Panc1 (cell line): ENCODE measurements at regions of chr10 and their contacts with region 1.

Region 1: GRCh38 chr10:29386342-29386999 is 97.6 kb downstream of the LYZL1 start:
- DNase-seq: no peak
- ATAC-seq: no peak
- H3K4me3 ChIP-seq: no peak overlapping the region
- H3K27ac ChIP-seq: no peak overlapping the region
- H3K4me1 ChIP-seq: no peaks in the 10 kb centered on the region
- H3K27me3 ChIP-seq: no peaks in the 10 kb centered on the region
- CTCF ChIP-seq: peak; percentile 77

Region 2: DNA sequence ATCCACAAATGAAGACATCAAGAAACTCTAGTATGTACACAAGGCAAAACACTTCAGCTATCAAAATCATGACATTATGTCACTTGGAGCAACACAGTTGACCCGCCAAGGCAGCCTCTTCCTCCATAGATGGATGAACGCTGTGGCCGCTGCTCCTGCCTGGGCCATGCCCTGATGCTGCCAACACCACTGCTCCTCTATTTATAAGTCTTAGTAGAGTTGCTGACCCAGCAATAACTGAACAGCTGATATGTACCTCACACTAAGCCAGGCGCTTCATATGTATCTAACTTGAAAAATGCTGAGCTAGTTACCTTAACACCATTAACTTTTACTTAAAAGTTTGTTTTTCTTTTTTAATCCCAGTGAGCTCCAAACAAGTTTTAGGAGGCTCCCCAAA is 34.3 kb after region 1 on chr10:
- CTCF ChIA-PET with region 1: no interaction called
- POLR2A ChIA-PET with region 1: no interaction called
- in situ Hi-C with region 1: no loop called
- intact Hi-C with region 1: no loop called
- DNase-seq: no peak
- ATAC-seq: no peak
- H3K4me3 ChIP-seq: no peak overlapping the region
- H3K27ac ChIP-seq: no peak overlapping the region
- H3K4me1 ChIP-seq: no peaks in the 10 kb centered on the region
- H3K27me3 ChIP-seq: no peaks in the 10 kb centered on the region
- CTCF ChIP-seq: no peak

Region 3: DNA sequence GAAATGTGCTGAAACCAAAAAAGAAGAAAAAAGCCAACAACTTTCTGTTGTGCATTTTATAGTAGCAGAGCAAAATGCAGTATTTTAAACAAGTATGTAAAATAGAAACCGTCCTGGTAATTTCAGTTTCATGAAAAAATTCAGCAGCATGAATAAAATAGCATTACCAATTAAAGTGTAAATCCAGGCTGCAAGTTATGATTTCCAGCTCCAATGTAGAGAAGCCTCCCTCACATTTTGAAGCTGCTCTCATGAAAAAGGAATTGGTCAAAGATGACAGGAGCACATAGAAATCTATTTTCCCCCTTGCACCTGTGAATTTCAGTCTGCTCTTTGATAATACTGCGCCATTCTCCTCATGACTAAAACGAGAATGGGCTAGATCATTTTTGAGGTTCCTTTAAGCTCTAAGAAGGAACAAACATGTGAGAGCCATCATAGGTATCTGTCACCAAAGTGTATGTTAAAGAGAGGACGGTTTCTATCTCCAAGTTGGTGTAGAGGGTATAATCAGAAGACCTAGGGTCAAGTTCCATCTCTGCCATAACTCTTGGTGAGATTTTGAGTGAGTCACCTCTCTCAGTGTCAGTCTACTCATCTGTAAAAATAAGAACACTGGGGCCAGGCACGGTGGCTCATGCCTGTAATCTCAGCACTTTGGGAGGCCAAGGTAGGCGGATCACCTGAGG is 855.1 kb after region 1 on chr10:
- CTCF ChIA-PET with region 1: interaction called, 10 read pairs
- POLR2A ChIA-PET with region 1: no interaction called
- in situ Hi-C with region 1: no loop called
- intact Hi-C with region 1: no loop called
- DNase-seq: no peak
- ATAC-seq: no peak
- H3K4me3 ChIP-seq: no peak overlapping the region
- H3K27ac ChIP-seq: no peak overlapping the region
- H3K4me1 ChIP-seq: no peaks in the 10 kb centered on the region; the same call in 1 of the 2 replicates
- H3K27me3 ChIP-seq: no peaks in the 10 kb centered on the region
- CTCF ChIP-seq: peak; percentile 24; the same call in 1 of the 2 replicates